ENCODE measurements at regions of chr16 and their contacts with region 1.

Region 1: DNA sequence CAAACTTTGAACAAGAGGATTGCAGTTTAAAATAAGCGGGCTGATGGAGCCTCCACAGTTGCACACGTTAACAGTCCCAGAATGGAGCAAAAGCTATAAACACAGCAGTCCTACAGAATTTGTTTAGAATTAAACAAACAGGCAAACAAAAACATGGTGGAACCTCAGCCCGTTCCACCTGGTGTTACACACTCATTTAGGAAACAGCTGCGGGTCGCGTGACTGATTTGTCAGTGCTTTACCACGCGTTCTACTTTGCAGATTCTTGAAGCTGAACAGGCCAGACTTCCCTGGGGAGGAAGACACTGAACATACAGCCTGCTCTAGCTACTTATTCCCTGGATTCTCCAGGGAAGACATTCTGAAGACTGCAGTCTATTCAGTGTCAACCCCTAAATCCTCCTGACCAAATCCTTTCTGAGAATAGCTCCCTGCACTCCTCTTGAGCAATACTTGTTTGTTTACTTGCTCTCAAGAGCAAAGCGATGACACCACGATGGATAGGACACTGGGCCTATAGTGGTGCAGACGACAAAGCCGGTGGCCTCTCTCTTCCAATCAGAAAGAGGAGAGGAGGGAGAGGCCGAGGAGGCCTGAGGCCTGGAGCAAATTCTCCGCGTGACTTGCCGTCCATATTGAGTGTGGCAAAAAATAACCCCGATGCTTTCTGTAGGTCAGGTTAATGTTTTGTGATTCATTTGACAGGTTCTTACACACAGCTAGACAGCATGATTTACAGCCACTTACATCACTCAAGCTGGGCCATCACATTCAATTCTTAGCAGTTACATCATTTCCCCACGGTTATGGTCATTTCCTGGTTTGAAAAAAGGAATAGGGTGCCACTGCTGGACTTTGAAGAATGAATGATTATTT is 4.0 kb upstream of the MAP1LC3B start:
- DNase-seq: peak; percentile 88
- H3K4me3 Mint-ChIP-seq: peak overlapping the region; percentile 61
- H3K27ac Mint-ChIP-seq: peak overlapping the region; percentile 89
- H3K4me1 Mint-ChIP-seq: peaks cover 34% of the 10 kb centered on the region
- H3K27me3 Mint-ChIP-seq: peaks cover 2% of the 10 kb centered on the region

Region 2: DNA sequence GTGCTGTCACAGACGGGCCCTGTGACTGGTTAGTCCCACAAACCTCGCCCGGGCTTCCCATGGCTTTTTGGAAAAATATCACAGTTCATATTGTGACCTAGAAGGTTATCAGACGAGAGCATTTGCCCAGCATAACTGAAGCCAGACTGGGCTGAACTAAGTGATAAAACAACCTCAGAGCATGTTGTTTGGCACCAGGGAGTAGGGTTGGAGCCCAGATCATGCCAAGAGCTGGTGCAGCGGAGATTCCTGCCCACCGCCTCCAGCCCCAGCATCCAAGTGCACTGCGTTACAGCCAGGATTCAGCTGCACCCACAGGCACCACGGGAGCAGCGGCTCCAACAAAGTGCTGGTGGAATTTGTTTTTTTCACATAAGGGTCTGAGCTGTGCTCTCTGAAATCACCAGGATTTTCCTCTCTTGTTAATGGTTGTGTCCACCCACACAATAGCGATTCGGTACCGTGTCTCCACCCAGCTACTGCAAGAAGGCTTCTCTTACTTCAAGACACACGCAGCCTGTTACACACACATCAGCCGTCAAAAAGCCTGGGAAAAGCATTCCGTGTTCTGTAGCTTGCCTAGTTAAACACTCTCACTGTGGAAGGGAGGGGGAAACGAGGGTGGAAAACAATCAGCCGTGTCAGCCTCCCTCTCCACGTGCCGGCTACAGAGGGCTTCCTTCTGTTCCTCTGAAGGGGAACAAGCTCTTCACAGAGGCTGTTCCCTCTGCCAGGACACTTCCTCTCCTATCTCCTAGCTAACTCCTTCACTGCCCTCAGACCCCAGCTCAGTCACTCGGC is 344.7 kb before region 1 on chr16:
- intact Hi-C with region 1: no loop called
- DNase-seq: no peak
- H3K4me3 Mint-ChIP-seq: no peak overlapping the region
- H3K27ac Mint-ChIP-seq: no peak overlapping the region
- H3K4me1 Mint-ChIP-seq: no peaks in the 10 kb centered on the region
- H3K27me3 Mint-ChIP-seq: peaks cover 8% of the 10 kb centered on the region

Region 3: GRCh38 chr16:87344931-87345631 is 43.1 kb before region 1 on chr16:
- intact Hi-C with region 1: loop called (anchors 2 kb)
- DNase-seq: peak; percentile 35
- H3K4me3 Mint-ChIP-seq: peak overlapping the region; percentile 67
- H3K27ac Mint-ChIP-seq: peak overlapping the region; percentile 92
- H3K4me1 Mint-ChIP-seq: peaks cover 11% of the 10 kb centered on the region
- H3K27me3 Mint-ChIP-seq: no peaks in the 10 kb centered on the region

Region 4: DNA sequence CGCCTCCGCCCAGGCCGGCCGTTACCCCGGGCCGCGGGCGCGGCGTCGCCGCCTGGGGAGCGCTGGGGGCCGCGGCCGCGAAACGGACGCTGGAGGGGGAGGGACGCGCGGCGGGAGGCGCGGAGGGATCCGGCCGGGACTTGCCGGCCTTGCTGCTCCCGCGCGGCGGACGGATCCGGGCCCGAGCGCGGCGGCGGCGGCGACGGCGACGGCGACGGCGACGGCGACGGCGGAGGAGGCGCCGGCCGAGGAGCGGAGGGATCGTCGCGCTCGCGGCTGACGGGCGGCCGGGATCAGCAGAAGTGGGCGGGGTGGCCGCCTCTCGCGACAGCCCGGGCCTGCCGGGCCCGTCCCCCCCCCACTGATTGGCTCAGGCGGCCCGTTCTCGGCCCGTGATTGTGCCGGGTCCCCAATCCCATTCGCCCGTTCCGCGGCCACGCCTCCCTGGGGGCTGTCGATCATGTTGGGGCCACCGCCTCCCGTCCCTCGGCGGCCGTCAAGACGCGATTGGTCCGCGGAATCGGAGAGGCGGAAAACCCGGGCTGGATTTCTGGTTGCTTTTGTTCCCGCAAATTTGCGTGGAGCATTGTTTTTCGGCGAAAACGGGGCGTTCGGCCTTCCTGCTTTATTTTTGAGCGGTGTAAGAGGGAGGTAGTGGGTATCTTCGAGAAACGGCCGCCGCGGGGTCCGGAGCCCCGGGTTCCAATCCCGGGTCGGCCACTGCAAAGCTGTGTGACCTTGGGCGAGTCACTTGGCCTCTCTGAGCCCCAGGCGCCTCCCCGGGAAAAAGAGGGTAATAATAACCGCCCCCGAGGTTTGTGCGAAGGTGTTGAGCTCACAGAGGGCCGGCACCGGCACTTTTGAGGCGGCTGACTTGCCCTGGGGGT is 104.8 kb after region 1 on chr16 and contains the start of gene ZCCHC14:
- intact Hi-C with region 1: loop called (anchors 1 kb)
- DNase-seq: peak; percentile 98
- H3K4me3 Mint-ChIP-seq: peak within 1 kb of the TSS; percentile 80
- H3K27ac Mint-ChIP-seq: peak within 1 kb of the TSS; percentile 82
- H3K4me1 Mint-ChIP-seq: peaks cover 53% of the 10 kb centered on the region
- H3K27me3 Mint-ChIP-seq: peaks cover 34% of the 10 kb centered on the region
- total RNA-seq, gene ZCCHC14: 9.9 and 11.0 TPM in 2 replicates

Region 5: DNA sequence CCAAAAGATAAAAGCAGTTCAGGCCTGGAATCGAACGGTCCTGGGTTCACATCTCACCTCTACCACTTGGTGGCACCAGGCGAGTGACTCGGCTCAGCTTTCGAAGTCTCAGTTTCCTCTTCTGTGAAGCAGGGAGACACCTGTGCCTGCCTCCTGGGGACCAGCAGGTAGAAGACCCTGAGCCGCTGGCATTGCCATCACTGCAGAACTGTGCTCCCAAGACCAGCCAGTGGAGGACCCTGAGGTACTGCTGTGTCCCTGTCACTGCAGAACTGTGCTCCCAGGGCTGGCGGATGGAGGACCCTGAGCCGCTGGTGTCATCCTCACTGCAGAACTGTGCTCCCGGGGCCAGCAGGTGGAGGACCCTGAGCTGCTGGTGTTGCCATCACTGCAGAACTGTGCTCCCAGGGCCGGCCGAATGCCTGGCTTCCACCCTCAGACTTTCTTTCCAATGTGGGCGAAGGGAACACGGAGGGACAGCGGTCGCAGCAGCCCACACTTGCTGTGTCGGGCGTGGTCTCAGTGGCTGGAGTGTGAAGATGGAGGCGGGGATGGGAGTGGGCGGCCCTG is 489.8 kb after region 1 on chr16:
- intact Hi-C with region 1: loop called (anchors 5 kb)
- DNase-seq: no peak
- H3K4me3 Mint-ChIP-seq: peak overlapping the region; percentile 45
- H3K27ac Mint-ChIP-seq: peak overlapping the region; percentile 79
- H3K4me1 Mint-ChIP-seq: peaks cover 47% of the 10 kb centered on the region
- H3K27me3 Mint-ChIP-seq: peaks cover 2% of the 10 kb centered on the region

Region 6: DNA sequence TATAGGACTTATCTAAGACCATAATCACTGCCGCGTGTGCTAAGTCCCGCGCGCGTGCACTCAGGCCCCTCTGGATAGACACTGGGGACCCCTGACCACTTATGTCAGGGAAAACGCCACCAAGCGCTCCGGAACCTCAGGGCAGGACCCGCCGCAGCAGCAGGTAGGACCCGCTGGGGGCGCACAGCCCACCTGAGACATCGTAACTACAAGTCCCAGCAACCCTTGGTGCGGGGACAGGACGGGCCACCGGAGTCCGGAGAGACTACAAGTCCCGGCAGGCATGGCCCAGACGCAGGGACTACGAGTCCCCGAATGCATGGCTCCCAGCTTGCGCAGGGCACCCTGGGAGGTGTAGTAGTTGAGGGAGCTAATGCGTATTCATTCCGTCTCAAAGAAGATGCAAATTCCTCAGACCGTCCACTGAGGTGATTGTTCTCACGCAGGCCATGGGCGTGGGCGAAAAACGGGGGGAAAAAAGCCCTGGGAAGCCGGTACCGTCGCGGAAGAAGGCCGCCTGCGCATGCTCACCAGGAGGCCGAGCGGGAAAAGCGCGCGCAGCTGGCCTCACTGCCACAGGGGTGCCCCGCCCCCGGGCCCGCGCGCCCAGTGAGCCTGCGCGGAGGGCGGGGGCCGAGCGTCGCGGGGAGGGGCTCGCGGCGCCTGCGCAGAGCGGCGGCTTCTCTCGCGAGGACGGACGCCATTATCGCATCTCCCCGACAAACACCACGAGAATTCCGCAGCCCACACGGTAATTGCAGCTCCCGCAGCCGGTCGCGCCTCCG is 562.8 kb after region 1 on chr16 and contains the start of gene BANP:
- intact Hi-C with region 1: loop called (anchors 1 kb)
- DNase-seq: peak; percentile 95
- H3K4me3 Mint-ChIP-seq: peak within 1 kb of the TSS; percentile 94
- H3K27ac Mint-ChIP-seq: peak within 1 kb of the TSS; percentile 94
- H3K4me1 Mint-ChIP-seq: peaks cover 49% of the 10 kb centered on the region
- H3K27me3 Mint-ChIP-seq: no peaks in the 10 kb centered on the region
- total RNA-seq, gene BANP: 35.4 and 35.5 TPM in 2 replicates